Transverse colon (tissue), 4 donors: ENCODE measurements at regions of chr6 and their contacts with region 1.

Region 1: GRCh38 chr6:136378886-136379285 is 89.2 kb upstream of the BCLAF1 start:
- DNase-seq: no peak
- H3K4me3 ChIP-seq: no peak overlapping the region
- H3K27ac ChIP-seq: no peak overlapping the region
- H3K4me1 ChIP-seq: no peaks in the 10 kb centered on the region
- H3K27me3 ChIP-seq: no peaks in the 10 kb centered on the region
- CTCF ChIP-seq: peak in 4 of 5 experiments; percentile 20 to 40 (median 31)
- EP300 ChIP-seq: no peak
- POLR2A ChIP-seq: no peak

Region 2: GRCh38 chr6:136526196-136526930 is 147.5 kb after region 1 on chr6:
- in situ Hi-C with region 1: loop called in 1 of 4 experiments (anchors 25 kb)
- intact Hi-C with region 1: no loop called
- DNase-seq: no peak
- H3K4me3 ChIP-seq: no peak overlapping the region
- H3K27ac ChIP-seq: no peak overlapping the region
- H3K4me1 ChIP-seq: peaks cover 0 to 16% (median 4%) of the 10 kb centered on the region in 4 donors
- H3K27me3 ChIP-seq: no peaks in the 10 kb centered on the region
- CTCF ChIP-seq: peak in 2 of 5 experiments; percentile 8 to 9
- EP300 ChIP-seq: no peak
- POLR2A ChIP-seq: no peak

Region 3: DNA sequence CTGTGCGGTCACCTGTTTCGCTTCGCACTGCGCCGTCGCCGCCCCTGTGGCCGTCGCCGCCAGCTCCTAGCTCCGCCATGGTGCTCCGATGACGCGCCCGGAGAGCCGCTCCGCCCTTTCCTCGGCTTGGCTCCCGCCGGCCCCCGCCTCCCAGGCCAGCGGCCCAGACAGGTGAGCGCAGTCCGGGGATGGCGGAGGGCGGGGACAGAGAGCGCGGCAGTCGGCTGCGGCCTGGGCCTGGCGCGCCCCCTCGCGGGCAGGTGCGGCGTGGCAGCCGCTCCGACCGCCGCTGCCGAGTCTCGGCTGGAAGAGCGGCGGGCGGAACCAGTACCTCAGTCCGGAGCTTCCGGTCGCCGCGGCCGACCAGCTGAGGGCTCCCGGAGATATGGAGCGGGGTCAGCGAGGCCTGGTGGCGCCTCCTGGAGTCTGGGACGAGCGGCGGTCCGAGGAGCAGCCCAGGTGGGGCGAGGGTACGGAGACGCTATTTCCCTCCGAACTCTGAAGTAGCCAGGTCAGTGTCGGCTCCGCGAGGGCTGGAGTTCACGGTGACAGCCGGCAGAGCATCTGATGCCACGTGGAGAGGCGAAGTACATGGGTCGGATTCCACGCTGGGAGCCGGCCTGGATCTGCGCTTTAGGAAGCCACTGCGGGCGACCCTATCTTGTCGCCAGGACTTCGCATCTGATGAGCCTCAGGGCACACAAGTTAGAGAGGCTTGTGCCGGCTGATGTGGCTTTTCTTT is 171.6 kb after region 1 on chr6 and contains the start of gene MAP7:
- in situ Hi-C with region 1: loop called in 2 of 4 experiments (anchors 10 to 25 kb)
- intact Hi-C with region 1: no loop called
- DNase-seq: peak; percentile 91
- H3K4me3 ChIP-seq: peak within 1 kb of the TSS; percentile 58 to 69 (median 64)
- H3K27ac ChIP-seq: peak within 1 kb of the TSS; percentile 69 to 86 (median 83)
- H3K4me1 ChIP-seq: peaks cover 3 to 40% (median 6%) of the 10 kb centered on the region in 4 donors
- H3K27me3 ChIP-seq: peaks cover 2% of the 10 kb centered on the region
- CTCF ChIP-seq: peak; percentile 59 to 98 (median 89)
- EP300 ChIP-seq: no peak
- POLR2A ChIP-seq: peak; percentile 61
- total RNA-seq, gene MAP7: 40.6 to 61.3 (median 46.6) TPM